Heart right ventricle (tissue), 16 donors: ENCODE measurements at regions of chr11 and their contacts with region 1.

Region 1: GRCh38 chr11:96154802-96155520 is 188.0 kb downstream of the MAML2 start:
- DNase-seq: no peak
- ATAC-seq: no peak
- H3K4me3 ChIP-seq: no peak overlapping the region
- H3K27ac ChIP-seq: peak overlapping the region; percentile 77 to 88 (median 84)
- H3K4me1 ChIP-seq: peaks cover 13 to 52% (median 44%) of the 10 kb centered on the region in 9 donors
- H3K27me3 ChIP-seq: no peaks in the 10 kb centered on the region
- CTCF ChIP-seq: no peak

Region 2: DNA sequence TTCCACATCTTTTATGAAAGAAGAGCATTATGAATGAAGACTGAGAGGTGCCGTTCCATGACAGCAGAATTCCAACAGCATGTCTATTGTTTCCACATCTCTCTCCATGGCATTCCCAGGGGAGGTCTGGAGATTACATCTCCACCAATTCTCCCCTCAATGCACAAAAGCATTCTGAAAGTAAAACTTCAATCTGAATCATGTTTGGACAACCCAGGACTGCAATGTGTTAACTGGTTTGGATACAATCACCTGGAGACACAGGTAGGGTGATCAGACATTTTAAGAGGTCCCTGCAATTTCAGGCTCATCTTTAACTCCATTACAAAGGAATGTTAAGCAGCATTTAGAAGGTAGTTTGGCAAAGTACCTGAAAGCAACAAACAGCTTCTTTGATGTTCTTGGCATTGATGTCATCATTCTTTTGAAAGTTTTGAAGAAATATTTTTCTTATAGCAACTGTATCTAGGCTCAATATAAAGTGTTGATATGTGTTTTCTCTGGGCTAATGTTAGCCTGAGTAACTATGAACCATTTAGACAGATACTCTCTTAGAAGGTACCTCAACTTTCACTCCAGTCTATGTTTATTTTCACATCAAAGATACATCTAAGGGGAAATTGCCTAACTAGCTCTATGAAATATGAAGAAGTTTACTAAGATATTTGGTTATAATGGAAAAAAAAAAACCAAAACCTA is 49.6 kb before region 1 on chr11:
- intact Hi-C with region 1: loop called in 1 of 10 experiments (anchors 5 kb)
- DNase-seq: no peak
- ATAC-seq: peak in 2 of 8 donors; percentile 31 to 41
- H3K4me3 ChIP-seq: no peak overlapping the region
- H3K27ac ChIP-seq: no peak overlapping the region
- H3K4me1 ChIP-seq: peaks cover 0 to 30% (median 19%) of the 10 kb centered on the region in 9 donors
- H3K27me3 ChIP-seq: no peaks in the 10 kb centered on the region
- CTCF ChIP-seq: no peak

Region 3: DNA sequence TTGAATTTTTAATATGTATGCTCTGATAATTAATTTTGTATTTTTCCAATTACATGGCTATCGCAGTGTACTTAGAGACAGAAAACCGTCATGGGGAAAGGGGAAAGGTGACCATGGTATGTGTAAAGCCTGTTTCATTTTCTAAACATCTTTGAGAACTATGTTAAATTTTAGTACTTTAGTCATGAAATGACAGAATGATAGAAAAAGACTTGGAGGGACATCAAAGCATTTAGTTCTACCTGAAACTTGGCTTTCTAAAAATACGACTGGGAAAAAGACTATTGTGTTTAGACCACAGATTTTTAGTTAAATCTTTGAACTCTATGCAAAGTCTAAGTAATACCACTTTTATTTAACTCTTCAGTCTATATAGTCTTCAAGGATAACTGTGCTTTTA is 134.0 kb after region 1 on chr11:
- intact Hi-C with region 1: no loop called
- DNase-seq: no peak
- ATAC-seq: no peak
- H3K4me3 ChIP-seq: no peak overlapping the region
- H3K27ac ChIP-seq: no peak overlapping the region
- H3K4me1 ChIP-seq: peaks cover 0 to 18% (median 14%) of the 10 kb centered on the region in 9 donors
- H3K27me3 ChIP-seq: no peaks in the 10 kb centered on the region
- CTCF ChIP-seq: no peak